IMR-90 (cell line): ENCODE measurements at regions of chr15 and their contacts with region 1.

Region 1: DNA sequence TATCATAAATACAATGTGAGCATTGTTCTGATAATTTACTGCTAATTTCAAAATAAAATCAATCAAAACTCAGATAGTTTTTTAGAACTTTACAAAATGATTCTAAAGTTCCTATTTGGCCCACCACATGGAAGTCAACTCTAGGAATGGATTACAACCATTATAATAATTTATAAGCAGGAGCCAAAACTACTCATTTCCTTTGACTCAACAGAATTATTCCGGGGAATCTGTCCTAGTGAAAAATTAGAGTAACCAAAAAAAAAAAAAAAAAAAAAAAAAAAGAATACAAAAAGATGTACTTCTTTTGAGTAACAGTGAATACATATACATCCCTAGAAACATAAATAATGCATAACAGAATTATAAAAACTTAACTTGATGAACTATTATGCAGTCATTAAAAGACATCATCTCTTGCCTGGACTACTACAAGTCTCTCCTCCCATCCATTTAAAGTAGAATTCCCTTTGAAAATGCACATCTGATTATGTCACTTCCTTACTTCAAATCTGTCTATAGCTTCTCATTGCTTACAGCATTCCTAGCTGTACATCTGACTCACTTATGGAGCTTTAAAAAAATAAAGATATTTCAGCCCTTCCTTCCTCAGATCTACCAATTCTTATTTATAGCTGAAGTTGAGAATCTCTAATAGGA is 43.4 kb downstream of the HDGFL3 start:
- DNase-seq: peak; percentile 86
- ATAC-seq: peak; percentile 84
- H3K4me3 ChIP-seq: no peak overlapping the region
- H3K27ac ChIP-seq: no peak overlapping the region
- H3K4me1 ChIP-seq: peaks cover 2% of the 10 kb centered on the region; the same call in 1 of the 2 replicates
- H3K27me3 ChIP-seq: no peaks in the 10 kb centered on the region
- CTCF ChIP-seq: no peak
- POLR2A ChIP-seq: no peak
- RAD21 ChIP-seq: no peak

Region 2: GRCh38 chr15:83011271-83012075 is 152.8 kb before region 1 on chr15 and contains the start of gene C15orf40:
- CTCF ChIA-PET with region 1: no interaction called
- POLR2A ChIA-PET with region 1: no interaction called
- dilution Hi-C with region 1: no loop called
- in situ Hi-C with region 1: no loop called
- intact Hi-C with region 1: no loop called
- DNase-seq: peak; percentile 90
- ATAC-seq: peak; percentile 92
- H3K4me3 ChIP-seq: peak within 1 kb of the TSS; percentile 90
- H3K27ac ChIP-seq: peak within 1 kb of the TSS; percentile 75
- H3K4me1 ChIP-seq: peaks cover 10% of the 10 kb centered on the region
- H3K27me3 ChIP-seq: no peaks in the 10 kb centered on the region
- CTCF ChIP-seq: peak; percentile 74
- POLR2A ChIP-seq: peak; percentile 56; the same call in 1 of the 2 replicates
- RAD21 ChIP-seq: peak; percentile 48
- total RNA-seq, gene C15orf40: 4.4 and 7.0 TPM in 2 replicates

Region 3: DNA sequence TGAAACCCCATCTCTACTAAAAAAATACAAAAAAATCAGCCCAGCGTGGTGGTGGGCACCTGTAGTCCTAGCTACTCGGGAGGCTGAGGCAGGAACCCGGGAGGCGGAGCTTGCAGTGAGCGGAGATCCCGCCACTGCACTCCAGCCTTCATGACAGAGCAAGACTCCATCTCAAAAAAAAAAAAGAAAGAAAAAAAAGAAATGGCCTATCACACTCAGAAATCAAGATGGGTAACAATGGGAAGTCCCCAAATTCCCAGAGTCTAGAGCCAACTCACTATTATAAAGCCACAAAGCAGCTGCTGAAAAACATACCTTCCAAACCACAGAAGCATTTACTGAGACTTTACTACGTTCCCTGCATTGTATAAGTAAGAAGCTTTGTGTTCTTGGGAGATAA is 35.9 kb after region 1 on chr15:
- CTCF ChIA-PET with region 1: no interaction called
- POLR2A ChIA-PET with region 1: no interaction called
- dilution Hi-C with region 1: no loop called
- in situ Hi-C with region 1: no loop called
- intact Hi-C with region 1: loop called (anchors 5 kb)
- DNase-seq: peak; percentile 78
- ATAC-seq: no peak
- H3K4me3 ChIP-seq: no peak overlapping the region
- H3K27ac ChIP-seq: no peak overlapping the region
- H3K4me1 ChIP-seq: peaks cover 7% of the 10 kb centered on the region
- H3K27me3 ChIP-seq: no peaks in the 10 kb centered on the region
- CTCF ChIP-seq: no peak
- POLR2A ChIP-seq: no peak
- RAD21 ChIP-seq: no peak